ENCODE measurements at regions of chr1 and their contacts with region 1.

Region 1: GRCh38 chr1:26838474-26839338 is 12.2 kb downstream of the ZDHHC18 start:
- DNase-seq: no peak
- ATAC-seq: no peak
- H3K4me3 ChIP-seq: no peak overlapping the region
- H3K27ac ChIP-seq: no peak overlapping the region
- H3K4me1 ChIP-seq: no peaks in the 10 kb centered on the region
- H3K27me3 ChIP-seq: no peaks in the 10 kb centered on the region
- CTCF ChIP-seq: no peak

Region 2: DNA sequence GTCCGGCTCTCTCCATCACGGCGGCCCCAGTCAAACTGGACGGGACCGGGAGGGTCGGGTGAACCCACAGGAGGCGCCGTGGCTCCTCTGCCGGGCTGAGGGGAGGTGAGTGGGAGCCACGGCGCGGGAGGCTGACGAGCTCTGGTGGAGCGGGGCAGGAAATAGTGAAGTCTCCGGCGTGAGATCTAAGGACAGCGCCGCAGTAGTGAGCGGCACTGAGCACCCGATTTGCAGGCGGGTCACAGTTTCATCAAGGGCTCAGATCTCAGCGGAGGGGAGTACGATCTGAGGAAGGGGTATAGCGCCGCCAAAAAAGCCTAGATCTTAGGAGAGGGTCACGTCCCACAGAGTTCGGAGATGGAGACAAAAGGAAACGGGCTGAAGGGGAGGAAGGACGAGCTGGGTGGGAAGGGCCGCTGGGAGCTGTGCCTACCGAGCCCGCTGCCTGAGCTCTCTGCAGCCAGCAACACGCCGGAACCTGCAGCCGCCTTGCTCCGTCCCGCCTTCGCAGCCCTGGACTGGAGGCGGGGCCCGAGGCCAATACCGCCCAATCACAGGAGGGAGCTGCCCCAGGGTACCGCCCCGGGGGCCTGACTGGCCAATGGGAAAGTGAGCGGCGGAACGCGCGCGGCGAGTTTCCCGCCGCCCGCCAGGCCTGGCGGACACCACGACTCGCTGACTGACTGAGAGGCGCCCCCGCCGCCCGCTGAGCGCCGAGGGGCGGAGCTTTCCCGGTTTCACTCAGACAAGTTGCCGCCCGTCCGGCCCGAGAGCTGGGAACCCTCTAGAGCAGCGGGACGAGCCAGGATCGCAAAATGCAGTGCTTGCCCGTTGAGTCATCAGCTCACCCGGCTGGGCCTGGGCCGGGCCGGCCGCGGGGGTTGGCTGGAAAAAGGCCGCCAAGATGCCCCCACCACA is 26.2 kb after region 1 on chr1:
- CTCF ChIA-PET with region 1: interaction called, 11 read pairs
- POLR2A ChIA-PET with region 1: interaction called, 3 read pairs
- intact Hi-C with region 1: no loop called
- DNase-seq: peak; percentile 99
- ATAC-seq: peak; percentile 64
- H3K4me3 ChIP-seq: peak overlapping the region; percentile 90
- H3K27ac ChIP-seq: peak overlapping the region; percentile 95
- H3K4me1 ChIP-seq: peaks cover 43% of the 10 kb centered on the region
- H3K27me3 ChIP-seq: no peaks in the 10 kb centered on the region
- CTCF ChIP-seq: 0 out of 2 replicates have a peak, but pooled peaks have one; percentile 20

Region 3: DNA sequence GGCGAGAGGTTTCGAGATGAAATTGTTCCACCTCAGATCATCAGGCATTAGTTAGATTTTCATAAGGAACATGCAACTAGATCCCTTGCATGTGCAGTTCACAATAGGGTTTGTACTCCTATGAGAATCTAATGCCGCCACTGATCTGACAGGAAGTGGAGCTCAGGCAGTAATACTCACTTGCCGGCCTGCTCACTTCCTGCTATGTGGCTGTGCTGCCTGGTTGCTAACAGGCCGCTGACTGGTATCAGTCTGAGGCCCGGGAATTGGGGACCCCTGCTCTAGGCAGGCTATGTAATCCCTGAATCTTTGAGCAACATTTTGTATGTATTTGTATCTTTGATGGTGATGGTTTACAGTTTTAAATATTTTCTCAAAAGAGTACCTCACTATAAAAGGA is 1153.6 kb after region 1 on chr1:
- CTCF ChIA-PET with region 1: no interaction called
- POLR2A ChIA-PET with region 1: no interaction called
- intact Hi-C with region 1: no loop called
- DNase-seq: no peak
- ATAC-seq: no peak
- H3K4me3 ChIP-seq: no peak overlapping the region
- H3K27ac ChIP-seq: no peak overlapping the region
- H3K4me1 ChIP-seq: no peaks in the 10 kb centered on the region
- H3K27me3 ChIP-seq: no peaks in the 10 kb centered on the region
- CTCF ChIP-seq: no peak

Measured in PC-3 (cell line).